ENCODE measurements at regions of chr22 and their contacts with region 1.

Region 1: GRCh38 chr22:34334893-34335292 is 414.6 kb upstream of the LARGE1 start:
- DNase-seq: no peak
- ATAC-seq: no peak
- H3K4me3 ChIP-seq: no peak overlapping the region
- H3K27ac ChIP-seq: no peak overlapping the region
- H3K4me1 ChIP-seq: no peaks in the 10 kb centered on the region
- H3K27me3 ChIP-seq: no peaks in the 10 kb centered on the region
- CTCF ChIP-seq: no peak
- POLR2A ChIP-seq: no peak

Region 2: GRCh38 chr22:33940741-33941140 is 394.2 kb before region 1 on chr22:
- intact Hi-C with region 1: loop called in 3 of 10 experiments (anchors 10 kb)
- DNase-seq: no peak
- ATAC-seq: no peak
- H3K4me3 ChIP-seq: no peak overlapping the region
- H3K27ac ChIP-seq: no peak overlapping the region
- H3K4me1 ChIP-seq: no peaks in the 10 kb centered on the region
- H3K27me3 ChIP-seq: peaks cover 0 to 7% (median 0%) of the 10 kb centered on the region in 9 donors
- CTCF ChIP-seq: no peak
- POLR2A ChIP-seq: no peak

Region 3: DNA sequence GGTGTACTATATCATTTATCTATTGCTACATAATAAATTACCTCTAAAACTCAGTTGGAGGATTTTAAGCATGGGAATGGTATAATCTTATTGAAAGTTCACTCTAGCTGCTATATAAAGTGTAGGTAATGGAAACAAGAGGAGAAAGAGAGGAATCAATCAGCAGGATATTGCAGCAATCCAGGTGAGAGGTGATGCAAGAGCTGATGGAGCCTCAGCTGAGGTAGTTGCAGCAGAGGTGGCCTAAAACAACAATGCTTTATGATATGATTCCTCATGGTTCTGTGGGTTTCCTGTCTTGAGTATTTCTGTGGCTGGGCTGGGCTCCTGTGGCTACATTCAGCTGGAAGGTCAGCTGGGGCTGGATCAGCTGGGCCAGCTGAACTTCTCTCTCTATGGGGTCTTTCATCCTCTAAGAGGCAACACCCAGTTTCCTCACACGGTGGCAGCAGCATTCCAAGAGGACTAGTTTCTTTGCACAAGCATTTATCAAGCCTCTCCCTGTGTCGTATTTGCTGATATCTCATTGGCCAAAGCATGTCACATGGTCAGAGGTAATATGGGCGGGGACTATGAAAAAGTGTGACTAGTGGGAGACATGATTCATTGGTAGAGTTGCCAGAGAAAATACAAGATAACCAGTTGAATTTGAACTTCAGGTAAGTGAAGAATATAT is 279.2 kb before region 1 on chr22:
- intact Hi-C with region 1: no loop called
- DNase-seq: no peak
- ATAC-seq: no peak
- H3K4me3 ChIP-seq: no peak overlapping the region
- H3K27ac ChIP-seq: no peak overlapping the region
- H3K4me1 ChIP-seq: no peaks in the 10 kb centered on the region
- H3K27me3 ChIP-seq: peaks cover 0 to 11% (median 0%) of the 10 kb centered on the region in 9 donors
- CTCF ChIP-seq: peak in 7 of 12 donors; percentile 4 to 48 (median 15)
- POLR2A ChIP-seq: no peak

Region 4: DNA sequence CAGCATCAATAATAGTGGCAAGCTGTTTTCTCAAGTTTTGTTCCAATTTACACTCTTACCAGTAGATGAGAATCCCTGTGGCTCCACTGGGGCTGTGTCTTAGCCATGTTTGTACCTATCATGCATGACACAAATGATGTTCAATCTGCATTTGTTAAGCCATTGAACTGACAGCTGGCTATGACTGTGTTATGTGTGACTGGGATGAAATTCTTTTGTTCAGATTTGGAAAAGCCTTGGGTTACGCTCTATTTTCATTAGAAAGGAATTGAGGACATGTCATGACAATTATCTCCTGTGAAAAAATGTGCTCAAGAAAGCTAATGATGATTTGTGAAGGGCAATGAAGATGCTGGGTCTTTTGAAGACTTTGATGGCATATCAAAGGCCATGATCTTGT is 212.9 kb before region 1 on chr22:
- intact Hi-C with region 1: loop called in 2 of 10 experiments (anchors 5 to 10 kb)
- DNase-seq: no peak
- ATAC-seq: no peak
- H3K4me3 ChIP-seq: no peak overlapping the region
- H3K27ac ChIP-seq: no peak overlapping the region
- H3K4me1 ChIP-seq: peaks cover 0 to 8% (median 0%) of the 10 kb centered on the region in 12 donors
- H3K27me3 ChIP-seq: peaks cover 0 to 3% (median 0%) of the 10 kb centered on the region in 9 donors
- CTCF ChIP-seq: no peak
- POLR2A ChIP-seq: no peak

Measured in heart left ventricle (tissue), 16 donors.